Upper lobe of right lung (tissue), 1 donor: ENCODE measurements at regions of chr22 and their contacts with region 1.

Region 1: GRCh38 chr22:49930739-49931412 is 12.4 kb downstream of the CRELD2 start:
- DNase-seq: peak; percentile 79
- ATAC-seq: peak; percentile 70
- H3K4me3 ChIP-seq: no peak overlapping the region
- H3K27ac ChIP-seq: peak overlapping the region; percentile 55
- H3K4me1 ChIP-seq: peaks cover 42% of the 10 kb centered on the region
- H3K27me3 ChIP-seq: peaks cover 9% of the 10 kb centered on the region
- CTCF ChIP-seq: peak; percentile 77

Region 2: GRCh38 chr22:49827853-49828598 is 102.8 kb before region 1 on chr22 and contains the start of gene BRD1:
- intact Hi-C with region 1: no loop called
- DNase-seq: peak; percentile 82
- ATAC-seq: peak; percentile 83
- H3K4me3 ChIP-seq: peak within 1 kb of the TSS; percentile 88
- H3K27ac ChIP-seq: peak within 1 kb of the TSS; percentile 88
- H3K4me1 ChIP-seq: peaks cover 22% of the 10 kb centered on the region
- H3K27me3 ChIP-seq: no peaks in the 10 kb centered on the region
- CTCF ChIP-seq: no peak
- total RNA-seq, gene BRD1: 39.0 TPM

Region 3: GRCh38 chr22:50012716-50013181 is 81.9 kb after region 1 on chr22 and contains the start of gene IL17REL:
- intact Hi-C with region 1: no loop called
- DNase-seq: peak; percentile 57
- ATAC-seq: no peak
- H3K4me3 ChIP-seq: no peak within 1 kb of the TSS
- H3K27ac ChIP-seq: no peak within 1 kb of the TSS
- H3K4me1 ChIP-seq: peaks cover 6% of the 10 kb centered on the region
- H3K27me3 ChIP-seq: peaks cover 73% of the 10 kb centered on the region
- CTCF ChIP-seq: peak; percentile 4
- total RNA-seq, gene IL17REL: not detected

Region 4: GRCh38 chr22:50030297-50031188 is 99.7 kb after region 1 on chr22:
- intact Hi-C with region 1: loop called (anchors 2 kb)
- DNase-seq: peak; percentile 90
- ATAC-seq: peak; percentile 93
- H3K4me3 ChIP-seq: no peak overlapping the region
- H3K27ac ChIP-seq: no peak overlapping the region
- H3K4me1 ChIP-seq: peaks cover 10% of the 10 kb centered on the region
- H3K27me3 ChIP-seq: peaks cover 12% of the 10 kb centered on the region
- CTCF ChIP-seq: peak; percentile 93